CD4-positive, alpha-beta memory T cell (primary cell): ENCODE measurements at regions of chr7 and their contacts with region 1.

Region 1: GRCh38 chr7:51141451-51142003 is 175.1 kb downstream of the COBL start:
- DNase-seq: peak in 1 of 5 donors; percentile 36
- H3K4me3 ChIP-seq: no peak overlapping the region
- H3K4me3 Mint-ChIP-seq: no peak overlapping the region
- H3K27ac ChIP-seq: no peak overlapping the region
- H3K27ac Mint-ChIP-seq: peak overlapping the region in 1 of 7 donors; percentile 46
- H3K4me1 ChIP-seq: peaks cover 6% of the 10 kb centered on the region
- H3K4me1 Mint-ChIP-seq: peaks cover 6 to 15% (median 11%) of the 10 kb centered on the region in 4 donors
- H3K27me3 ChIP-seq: no peaks in the 10 kb centered on the region
- H3K27me3 Mint-ChIP-seq: peaks cover 2 to 5% of the 10 kb centered on the region in 2 donors

Region 2: GRCh38 chr7:50092579-50093491 is 1048.7 kb before region 1 on chr7 and contains the start of gene ZPBP:
- CTCF ChIA-PET with region 1: interaction called, 3 read pairs
- POLR2A ChIA-PET with region 1: no interaction called
- intact Hi-C with region 1: loop called (anchors 5 kb)
- DNase-seq: peak; percentile 62 to 72 (median 69)
- H3K4me3 ChIP-seq: peak within 1 kb of the TSS; percentile 44 to 66
- H3K4me3 Mint-ChIP-seq: peak within 1 kb of the TSS; percentile 88 to 95 (median 88)
- H3K27ac ChIP-seq: peak within 1 kb of the TSS; percentile 23
- H3K27ac Mint-ChIP-seq: peak within 1 kb of the TSS; percentile 45 to 88 (median 80)
- H3K4me1 ChIP-seq: peaks cover 4% of the 10 kb centered on the region
- H3K4me1 Mint-ChIP-seq: peaks cover 4 to 7% (median 7%) of the 10 kb centered on the region in 4 donors
- H3K27me3 ChIP-seq: no peaks in the 10 kb centered on the region
- H3K27me3 Mint-ChIP-seq: no peaks in the 10 kb centered on the region
- total RNA-seq, gene ZPBP: not detected

Region 3: DNA sequence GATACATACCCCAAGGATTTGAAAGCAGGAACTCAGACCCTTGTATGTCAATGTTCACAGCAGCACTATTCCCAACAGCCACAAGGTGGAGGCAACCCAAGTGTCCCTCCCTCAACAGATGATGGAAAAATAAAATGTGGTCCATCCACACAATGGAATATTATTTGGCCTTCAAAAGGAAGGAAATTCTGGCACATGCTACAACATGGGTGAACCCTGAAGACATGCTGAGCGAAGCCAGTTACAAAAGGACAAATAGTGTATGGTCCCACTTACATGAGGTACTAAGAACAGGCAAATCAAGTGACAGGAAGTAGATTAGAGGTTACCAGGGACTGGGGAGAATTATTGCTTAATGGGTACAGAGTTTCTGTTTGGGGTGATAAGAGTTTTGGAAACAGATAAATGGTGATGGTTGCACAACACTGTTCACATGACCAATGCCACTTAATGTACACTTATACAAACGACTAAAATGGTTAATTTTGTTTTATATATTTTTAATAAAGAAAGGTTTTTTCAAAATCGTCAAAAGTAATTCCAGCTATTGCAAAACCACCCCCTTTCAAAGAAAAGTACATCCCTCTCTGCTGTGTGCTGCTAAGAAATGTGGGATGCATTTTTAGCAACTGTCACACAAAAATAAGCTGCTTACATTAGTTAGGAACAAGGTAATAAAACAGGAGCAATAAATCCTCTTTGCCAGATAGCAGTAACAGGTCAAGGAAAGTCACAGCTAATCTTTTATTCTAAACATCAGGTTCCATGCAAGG is 444.5 kb before region 1 on chr7:
- CTCF ChIA-PET with region 1: interaction called, 4 read pairs
- POLR2A ChIA-PET with region 1: no interaction called
- intact Hi-C with region 1: loop called (anchors 1 kb)
- DNase-seq: peak in 4 of 5 donors; percentile 15 to 24 (median 20)
- H3K4me3 ChIP-seq: no peak overlapping the region
- H3K4me3 Mint-ChIP-seq: no peak overlapping the region
- H3K27ac ChIP-seq: no peak overlapping the region
- H3K27ac Mint-ChIP-seq: peak overlapping the region in 1 of 7 donors; percentile 14
- H3K4me1 ChIP-seq: no peaks in the 10 kb centered on the region
- H3K4me1 Mint-ChIP-seq: peaks cover 3 to 4% (median 4%) of the 10 kb centered on the region in 4 donors
- H3K27me3 ChIP-seq: no peaks in the 10 kb centered on the region
- H3K27me3 Mint-ChIP-seq: peaks cover 0 to 2% of the 10 kb centered on the region in 2 donors

Region 4: GRCh38 chr7:50782384-50783208 is 358.9 kb before region 1 on chr7 and contains the start of gene GRB10:
- CTCF ChIA-PET with region 1: no interaction called
- POLR2A ChIA-PET with region 1: no interaction called
- intact Hi-C with region 1: loop called (anchors 5 kb)
- DNase-seq: peak in 1 of 5 donors; percentile 23
- H3K4me3 ChIP-seq: no peak within 1 kb of the TSS
- H3K4me3 Mint-ChIP-seq: peak within 1 kb of the TSS; percentile 74 to 86 (median 80)
- H3K27ac ChIP-seq: no peak within 1 kb of the TSS
- H3K27ac Mint-ChIP-seq: peak within 1 kb of the TSS in 6 of 7 donors; percentile 5 to 88 (median 60)
- H3K4me1 ChIP-seq: peaks cover 7% of the 10 kb centered on the region
- H3K4me1 Mint-ChIP-seq: peaks cover 16 to 28% (median 24%) of the 10 kb centered on the region in 4 donors
- H3K27me3 ChIP-seq: peaks cover 3% of the 10 kb centered on the region
- H3K27me3 Mint-ChIP-seq: peaks cover 15 to 22% of the 10 kb centered on the region in 2 donors
- total RNA-seq, gene GRB10: 7.4 to 7.7 TPM

Region 5: DNA sequence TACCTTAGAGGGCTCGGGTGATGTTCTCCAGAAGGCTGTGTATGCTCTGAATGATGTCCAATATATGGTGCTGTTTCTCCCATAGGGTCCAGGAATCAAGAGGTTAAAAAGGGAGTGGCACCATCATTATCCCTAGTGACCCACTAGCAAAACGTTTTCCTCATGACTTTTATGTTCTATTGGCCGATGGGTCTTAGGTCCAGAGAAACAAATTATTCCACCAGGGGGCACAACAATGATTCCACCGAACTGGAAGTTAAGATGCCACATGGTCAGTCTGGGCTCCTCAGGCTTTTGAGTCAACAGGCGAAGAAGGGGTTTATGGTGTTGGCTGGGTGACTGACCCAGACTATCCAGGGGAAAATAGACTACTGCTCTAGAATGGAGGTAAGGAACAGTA is 81.0 kb before region 1 on chr7:
- CTCF ChIA-PET with region 1: interaction called, 3 read pairs
- POLR2A ChIA-PET with region 1: no interaction called
- intact Hi-C with region 1: loop called (anchors 1 kb)
- DNase-seq: no peak
- H3K4me3 ChIP-seq: no peak overlapping the region
- H3K4me3 Mint-ChIP-seq: no peak overlapping the region
- H3K27ac ChIP-seq: no peak overlapping the region
- H3K27ac Mint-ChIP-seq: no peak overlapping the region
- H3K4me1 ChIP-seq: no peaks in the 10 kb centered on the region
- H3K4me1 Mint-ChIP-seq: no peaks in the 10 kb centered on the region
- H3K27me3 ChIP-seq: no peaks in the 10 kb centered on the region
- H3K27me3 Mint-ChIP-seq: peaks cover 2 to 4% of the 10 kb centered on the region in 2 donors

Region 6: GRCh38 chr7:51123322-51124029 is 18.1 kb before region 1 on chr7:
- CTCF ChIA-PET with region 1: interaction called, 5 read pairs
- POLR2A ChIA-PET with region 1: interaction called, 3 read pairs
- intact Hi-C with region 1: loop called (anchors 2 kb)
- DNase-seq: peak in 1 of 5 donors; percentile 56
- H3K4me3 ChIP-seq: no peak overlapping the region
- H3K4me3 Mint-ChIP-seq: peak overlapping the region in 1 of 8 donors; percentile 7
- H3K27ac ChIP-seq: no peak overlapping the region
- H3K27ac Mint-ChIP-seq: peak overlapping the region in 1 of 7 donors; percentile 58
- H3K4me1 ChIP-seq: peaks cover 18% of the 10 kb centered on the region
- H3K4me1 Mint-ChIP-seq: peaks cover 23 to 32% (median 28%) of the 10 kb centered on the region in 4 donors
- H3K27me3 ChIP-seq: no peaks in the 10 kb centered on the region
- H3K27me3 Mint-ChIP-seq: peaks cover 1 to 3% of the 10 kb centered on the region in 2 donors

Region 7: GRCh38 chr7:51154201-51154600 is 12.7 kb after region 1 on chr7:
- CTCF ChIA-PET with region 1: interaction called, 18 read pairs
- POLR2A ChIA-PET with region 1: no interaction called
- intact Hi-C with region 1: no loop called
- DNase-seq: no peak
- H3K4me3 ChIP-seq: no peak overlapping the region
- H3K4me3 Mint-ChIP-seq: no peak overlapping the region
- H3K27ac ChIP-seq: no peak overlapping the region
- H3K27ac Mint-ChIP-seq: no peak overlapping the region
- H3K4me1 ChIP-seq: no peaks in the 10 kb centered on the region
- H3K4me1 Mint-ChIP-seq: no peaks in the 10 kb centered on the region
- H3K27me3 ChIP-seq: no peaks in the 10 kb centered on the region
- H3K27me3 Mint-ChIP-seq: peaks cover 10 to 14% of the 10 kb centered on the region in 2 donors